ENCODE measurements at regions of chr16 and their contacts with region 1.

Region 1: DNA sequence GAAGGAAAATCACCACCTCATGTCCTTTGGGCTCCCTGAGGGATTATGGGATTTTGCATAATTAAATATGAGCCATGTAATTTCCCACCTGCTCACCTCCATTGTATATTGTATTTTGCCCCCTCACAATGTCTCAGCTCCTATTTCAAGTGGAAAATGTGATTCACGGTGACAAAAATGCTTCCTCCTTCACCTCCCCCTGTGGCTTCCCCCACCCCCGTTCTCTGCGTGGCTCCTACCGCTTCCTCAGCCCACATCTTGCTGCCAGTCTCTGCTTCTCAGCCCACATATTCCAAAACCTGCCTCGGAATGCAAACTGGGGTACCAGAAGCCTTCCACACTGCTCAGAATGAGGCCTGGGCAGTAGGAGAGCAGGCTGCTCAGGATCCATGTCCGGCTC is 394.5 kb upstream of the C16orf82 start:
- DNase-seq: no peak
- H3K4me3 ChIP-seq: no peak overlapping the region
- H3K27ac ChIP-seq: no peak overlapping the region
- H3K4me1 ChIP-seq: no peaks in the 10 kb centered on the region
- H3K27me3 ChIP-seq: no peaks in the 10 kb centered on the region
- CTCF ChIP-seq: no peak
- EP300 ChIP-seq: no peak
- POLR2A ChIP-seq: no peak

Region 2: DNA sequence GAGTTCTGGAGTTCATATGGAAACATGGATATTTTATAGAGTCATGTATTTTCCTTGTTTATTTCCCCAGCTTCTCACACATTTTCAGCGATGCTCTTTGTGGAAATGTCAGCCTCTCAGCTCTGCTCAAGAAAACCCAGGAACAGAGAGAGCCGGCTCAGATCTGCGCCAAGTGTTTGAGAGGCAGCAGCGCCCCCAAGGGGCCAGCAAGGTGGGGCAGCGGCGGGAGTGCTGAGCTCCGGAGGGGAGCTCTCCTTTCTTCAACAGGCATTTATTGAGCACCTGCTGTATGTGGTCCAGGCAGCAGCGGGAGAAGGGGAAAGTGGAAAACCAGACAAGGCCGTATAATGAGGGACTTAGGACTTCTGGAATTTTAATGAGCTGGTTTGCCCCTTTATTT is 26.6 kb before region 1 on chr16:
- intact Hi-C with region 1: no loop called
- DNase-seq: no peak
- H3K4me3 ChIP-seq: no peak overlapping the region
- H3K27ac ChIP-seq: no peak overlapping the region
- H3K4me1 ChIP-seq: no peaks in the 10 kb centered on the region
- H3K27me3 ChIP-seq: no peaks in the 10 kb centered on the region
- CTCF ChIP-seq: no peak
- EP300 ChIP-seq: no peak
- POLR2A ChIP-seq: no peak

Region 3: GRCh38 chr16:26688105-26688504 is 15.9 kb after region 1 on chr16:
- intact Hi-C with region 1: no loop called
- DNase-seq: no peak
- H3K4me3 ChIP-seq: no peak overlapping the region
- H3K27ac ChIP-seq: no peak overlapping the region
- H3K4me1 ChIP-seq: no peaks in the 10 kb centered on the region
- H3K27me3 ChIP-seq: no peaks in the 10 kb centered on the region
- CTCF ChIP-seq: no peak
- EP300 ChIP-seq: no peak
- POLR2A ChIP-seq: no peak

Region 4: GRCh38 chr16:26729951-26730541 is 57.8 kb after region 1 on chr16:
- intact Hi-C with region 1: loop called (anchors 10 kb)
- DNase-seq: no peak
- H3K4me3 ChIP-seq: no peak overlapping the region
- H3K27ac ChIP-seq: no peak overlapping the region
- H3K4me1 ChIP-seq: no peaks in the 10 kb centered on the region
- H3K27me3 ChIP-seq: no peaks in the 10 kb centered on the region
- CTCF ChIP-seq: no peak
- EP300 ChIP-seq: no peak
- POLR2A ChIP-seq: no peak